ENCODE measurements at regions of chr13 and their contacts with region 1.

Region 1: DNA sequence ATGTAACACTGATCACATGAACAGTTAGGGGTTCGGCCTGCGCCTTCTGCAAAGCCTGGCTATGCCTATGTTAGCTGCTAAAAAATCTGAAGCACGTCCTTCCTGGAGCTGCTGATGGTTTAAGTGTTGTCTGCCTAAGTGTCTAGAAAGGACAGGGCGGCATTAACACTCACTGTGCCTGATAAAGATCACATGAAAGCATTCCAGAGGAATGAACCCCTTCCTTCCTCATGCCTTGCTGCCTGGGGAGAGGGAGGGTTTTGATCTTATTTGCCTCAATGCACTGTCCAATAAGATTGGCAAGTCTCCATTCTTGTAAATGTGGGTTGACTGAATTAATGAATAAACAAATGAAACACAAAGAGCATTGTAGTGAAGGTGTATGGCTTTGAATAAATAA is 5.2 kb downstream of the DOCK9 start:
- DNase-seq: peak; percentile 93
- H3K4me3 ChIP-seq: peak overlapping the region in 1 of 3 experiments; percentile 10
- H3K27ac ChIP-seq: peak overlapping the region; percentile 97
- H3K4me1 ChIP-seq: peaks cover 66% of the 10 kb centered on the region
- H3K27me3 ChIP-seq: no peaks in the 10 kb centered on the region
- CTCF ChIP-seq: no peak
- POLR2A ChIP-seq: peak; percentile 60

Region 2: GRCh38 chr13:98853771-98854221 is 118.8 kb before region 1 on chr13:
- CTCF ChIA-PET with region 1: interaction called, 3 read pairs
- POLR2A ChIA-PET with region 1: no interaction called
- dilution Hi-C with region 1: no loop called
- intact Hi-C with region 1: loop called (anchors 1 kb)
- DNase-seq: no peak
- H3K4me3 ChIP-seq: no peak overlapping the region
- H3K27ac ChIP-seq: no peak overlapping the region
- H3K4me1 ChIP-seq: peaks cover 31% of the 10 kb centered on the region
- H3K27me3 ChIP-seq: no peaks in the 10 kb centered on the region
- CTCF ChIP-seq: no peak
- POLR2A ChIP-seq: no peak

Region 3: DNA sequence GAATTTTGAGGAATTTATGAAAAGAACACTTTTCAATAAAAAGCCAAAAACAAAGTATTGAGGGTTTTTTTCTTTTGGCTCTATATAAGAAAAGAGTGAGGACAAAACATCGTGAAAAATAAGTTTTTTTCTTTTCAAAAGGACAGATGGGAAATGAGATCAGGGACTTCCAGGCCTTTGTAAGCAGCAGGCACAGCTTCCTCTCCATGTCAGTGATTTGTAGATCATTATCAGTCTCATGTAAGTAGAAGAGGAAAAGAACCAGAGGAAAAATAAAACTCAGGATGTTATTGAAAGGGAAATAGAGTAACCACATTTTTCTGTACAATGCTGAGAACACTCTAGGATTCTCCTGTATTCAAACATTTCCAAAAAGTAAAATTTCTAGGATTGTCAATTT is 24.7 kb before region 1 on chr13:
- CTCF ChIA-PET with region 1: interaction called, 7 read pairs
- POLR2A ChIA-PET with region 1: no interaction called
- dilution Hi-C with region 1: no loop called
- intact Hi-C with region 1: loop called (anchors 1 kb)
- DNase-seq: peak; percentile 75
- H3K4me3 ChIP-seq: no peak overlapping the region
- H3K27ac ChIP-seq: peak overlapping the region; percentile 54
- H3K4me1 ChIP-seq: peaks cover 48% of the 10 kb centered on the region
- H3K27me3 ChIP-seq: no peaks in the 10 kb centered on the region
- CTCF ChIP-seq: no peak
- POLR2A ChIP-seq: no peak

Region 4: GRCh38 chr13:98959786-98960605 is 12.6 kb before region 1 on chr13:
- CTCF ChIA-PET with region 1: interaction called, 17 read pairs
- POLR2A ChIA-PET with region 1: interaction called, 4 read pairs
- dilution Hi-C with region 1: no loop called
- intact Hi-C with region 1: loop called (anchors 1 kb)
- DNase-seq: peak; percentile 86
- H3K4me3 ChIP-seq: no peak overlapping the region
- H3K27ac ChIP-seq: peak overlapping the region; percentile 78
- H3K4me1 ChIP-seq: peaks cover 39% of the 10 kb centered on the region
- H3K27me3 ChIP-seq: no peaks in the 10 kb centered on the region
- CTCF ChIP-seq: no peak
- POLR2A ChIP-seq: no peak